Activated T-helper 2 cell treated with anti-CD3 and anti-CD28 coated beads, Interferon-gamma antibody, Interleukin-2, Interleukin-4, amounts not matched to agents 10 μg/mL and 5 μg/mL and 100 μg/mL, durations not matched to agents 14 hours and 24 hours and 36 hours (primary cell): ENCODE measurements at regions of chr15 and their contacts with region 1.

Region 1: DNA sequence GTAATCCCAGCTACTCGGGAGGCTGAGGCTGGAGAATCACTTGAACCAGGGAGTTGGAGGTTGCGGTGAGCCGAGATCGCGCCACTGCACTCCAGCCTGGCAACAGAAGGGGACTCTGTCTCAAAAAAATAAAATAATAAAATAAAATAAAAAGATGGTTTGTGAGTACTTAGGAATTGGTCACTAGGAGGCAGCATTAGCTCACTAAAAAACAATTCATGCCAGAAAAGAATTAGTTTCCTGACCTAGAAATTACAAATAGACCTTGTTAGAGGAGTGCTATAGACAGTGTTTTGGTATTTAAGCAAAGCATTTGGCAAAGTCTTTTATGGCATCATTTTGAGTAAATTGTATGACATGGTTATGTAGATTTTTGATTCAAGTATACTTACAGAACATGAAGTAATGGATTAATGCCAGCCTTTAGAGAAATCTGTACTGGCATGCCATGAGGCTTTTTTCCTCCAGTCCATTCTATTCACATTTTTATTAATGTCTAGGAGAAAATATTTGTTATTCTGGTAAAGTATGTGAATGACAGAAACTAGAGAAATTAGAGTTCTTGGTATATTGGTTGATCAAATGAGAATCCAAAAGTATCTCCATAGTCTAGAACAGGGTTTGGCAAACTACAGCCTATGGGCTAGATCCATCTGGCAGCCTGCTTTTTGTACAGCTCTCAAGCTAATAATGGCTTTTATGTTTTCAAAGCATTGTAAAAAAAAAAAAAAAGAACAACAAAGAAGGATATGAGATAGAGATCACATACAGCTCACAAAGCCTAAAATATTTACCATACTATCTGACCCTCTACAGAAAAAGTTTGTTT is 81.6 kb downstream of the LRRC49 start:
- DNase-seq: no peak
- H3K4me3 Mint-ChIP-seq: no peak overlapping the region
- H3K27ac Mint-ChIP-seq: no peak overlapping the region
- H3K4me1 Mint-ChIP-seq: no peaks in the 10 kb centered on the region
- H3K27me3 Mint-ChIP-seq: peaks cover 6% of the 10 kb centered on the region

Region 2: GRCh38 chr15:70795311-70795665 is 178.9 kb before region 1 on chr15:
- intact Hi-C with region 1: no loop called
- DNase-seq: no peak
- H3K4me3 Mint-ChIP-seq: no peak overlapping the region
- H3K27ac Mint-ChIP-seq: no peak overlapping the region
- H3K4me1 Mint-ChIP-seq: no peaks in the 10 kb centered on the region
- H3K27me3 Mint-ChIP-seq: peaks cover 11% of the 10 kb centered on the region

Region 3: GRCh38 chr15:71448688-71449114 is 474.5 kb after region 1 on chr15:
- intact Hi-C with region 1: loop called (anchors 10 kb)
- DNase-seq: no peak
- H3K4me3 Mint-ChIP-seq: no peak overlapping the region
- H3K27ac Mint-ChIP-seq: no peak overlapping the region
- H3K4me1 Mint-ChIP-seq: no peaks in the 10 kb centered on the region
- H3K27me3 Mint-ChIP-seq: no peaks in the 10 kb centered on the region